ENCODE measurements at regions of chr11 and their contacts with region 1.

Region 1: DNA sequence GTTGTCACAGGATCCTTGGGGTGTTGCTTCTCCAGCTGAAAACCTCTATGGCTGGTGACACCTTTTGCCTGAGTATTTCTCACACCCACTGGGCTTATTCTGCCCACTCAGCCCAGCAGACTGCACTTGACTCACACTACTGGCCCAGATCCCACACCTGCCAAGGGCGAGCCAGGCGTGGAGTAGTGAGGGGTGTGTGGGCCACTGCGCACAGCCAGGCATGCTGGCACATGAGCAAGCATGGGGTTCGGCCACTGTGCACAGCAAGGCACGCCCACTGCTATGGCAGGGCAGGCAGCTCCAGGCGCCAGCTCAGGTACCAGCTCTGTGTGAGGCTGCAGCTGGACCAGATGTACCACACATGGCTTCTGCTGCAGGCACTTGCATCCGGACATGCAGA is 116.5 kb upstream of the MTNR1B start:
- DNase-seq: peak; percentile 92
- H3K4me3 ChIP-seq: no peak overlapping the region
- H3K27ac ChIP-seq: no peak overlapping the region
- H3K4me1 ChIP-seq: peaks cover 16% of the 10 kb centered on the region
- H3K27me3 ChIP-seq: no peaks in the 10 kb centered on the region
- CTCF ChIP-seq: no peak

Region 2: GRCh38 chr11:92340839-92341238 is 512.1 kb before region 1 on chr11:
- CTCF ChIA-PET with region 1: no interaction called
- dilution Hi-C with region 1: no loop called
- in situ Hi-C with region 1: loop called in 1 of 2 experiments (anchors 25 kb)
- intact Hi-C with region 1: no loop called
- DNase-seq: peak; percentile 20
- H3K4me3 ChIP-seq: no peak overlapping the region
- H3K27ac ChIP-seq: no peak overlapping the region
- H3K4me1 ChIP-seq: no peaks in the 10 kb centered on the region
- H3K27me3 ChIP-seq: no peaks in the 10 kb centered on the region
- CTCF ChIP-seq: peak; percentile 63 to 78

Region 3: DNA sequence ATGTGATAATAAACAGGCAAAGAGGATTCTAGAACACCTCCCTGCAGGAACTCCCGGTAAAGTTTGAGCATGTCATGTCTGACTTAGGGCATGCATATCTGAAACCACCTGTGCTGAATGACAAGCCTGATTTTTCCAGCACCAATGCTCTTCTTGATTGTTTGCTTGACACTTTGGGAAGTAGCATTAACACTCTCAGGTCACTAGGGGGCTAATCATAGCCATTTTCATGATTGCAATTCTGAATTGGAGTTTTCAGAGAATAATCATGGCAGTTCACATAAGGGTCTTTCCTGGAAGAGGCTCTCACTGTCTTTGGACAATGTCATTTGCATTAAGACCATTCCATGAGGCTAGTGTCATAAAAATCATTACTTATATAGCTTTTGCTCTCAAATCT is 117.9 kb before region 1 on chr11:
- CTCF ChIA-PET with region 1: no interaction called
- dilution Hi-C with region 1: no loop called
- in situ Hi-C with region 1: loop called in 1 of 2 experiments (anchors 10 kb)
- intact Hi-C with region 1: loop called (anchors 10 kb)
- DNase-seq: no peak
- H3K4me3 ChIP-seq: no peak overlapping the region
- H3K27ac ChIP-seq: no peak overlapping the region
- H3K4me1 ChIP-seq: no peaks in the 10 kb centered on the region
- H3K27me3 ChIP-seq: peaks cover 8% of the 10 kb centered on the region
- CTCF ChIP-seq: peak; percentile 55 to 65

Region 4: DNA sequence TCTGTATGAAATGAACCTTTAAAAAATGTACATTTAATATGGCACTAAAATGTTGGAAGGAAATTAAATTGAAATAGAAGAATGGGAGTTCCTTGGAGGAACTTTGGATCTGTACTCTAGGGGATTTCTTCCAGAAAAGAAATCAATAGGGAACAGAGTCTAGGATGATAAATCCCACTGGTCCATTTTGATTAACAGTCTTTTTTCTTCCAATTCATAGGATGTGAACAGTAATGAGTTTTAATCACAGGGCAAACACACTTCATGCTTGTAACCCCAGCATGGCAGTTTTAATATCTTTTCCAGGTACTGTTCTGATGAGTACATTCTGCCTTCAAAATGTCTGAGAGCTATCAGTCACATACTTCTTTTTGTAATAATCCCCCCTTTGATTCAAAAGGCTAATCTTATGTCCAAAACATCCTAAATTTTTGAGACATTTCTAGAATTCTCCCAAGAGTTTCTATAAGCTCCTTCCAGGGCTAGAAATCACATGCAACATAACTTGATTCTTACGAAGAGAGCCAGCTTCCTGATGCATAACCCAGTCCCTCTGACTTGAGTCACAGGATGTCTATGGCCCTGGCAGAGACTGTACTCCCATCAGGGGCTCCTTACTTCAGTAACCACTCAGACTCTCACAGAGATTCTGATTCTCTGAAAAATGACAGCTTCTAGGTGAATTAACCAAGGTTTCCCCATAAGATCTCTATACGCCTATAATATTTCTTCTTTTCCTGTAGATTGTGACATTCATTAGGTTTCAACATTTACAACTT is 232.0 kb after region 1 on chr11:
- CTCF ChIA-PET with region 1: no interaction called
- dilution Hi-C with region 1: no loop called
- in situ Hi-C with region 1: no loop called
- intact Hi-C with region 1: no loop called
- DNase-seq: peak; percentile 61
- H3K4me3 ChIP-seq: no peak overlapping the region
- H3K27ac ChIP-seq: peak overlapping the region; percentile 58
- H3K4me1 ChIP-seq: peaks cover 9% of the 10 kb centered on the region
- H3K27me3 ChIP-seq: no peaks in the 10 kb centered on the region
- CTCF ChIP-seq: no peak

Measured in mammary epithelial cell (primary cell).